Activated naive CD4-positive, alpha-beta T cell treated with anti-CD3 and anti-CD28 coated beads, Interleukin-2, amount 10 ng/mL, durations not matched to agents 7 days and 5 days (primary cell): ENCODE measurements at regions of chr16 and their contacts with region 1.

Region 1: GRCh38 chr16:67546761-67547422 is 15.4 kb upstream of the CTCF start:
- DNase-seq: peak; percentile 85
- H3K4me3 Mint-ChIP-seq: peak overlapping the region; percentile 73
- H3K27ac Mint-ChIP-seq: peak overlapping the region; percentile 100
- H3K4me1 Mint-ChIP-seq: peaks cover 73% of the 10 kb centered on the region
- H3K27me3 Mint-ChIP-seq: no peaks in the 10 kb centered on the region

Region 2: DNA sequence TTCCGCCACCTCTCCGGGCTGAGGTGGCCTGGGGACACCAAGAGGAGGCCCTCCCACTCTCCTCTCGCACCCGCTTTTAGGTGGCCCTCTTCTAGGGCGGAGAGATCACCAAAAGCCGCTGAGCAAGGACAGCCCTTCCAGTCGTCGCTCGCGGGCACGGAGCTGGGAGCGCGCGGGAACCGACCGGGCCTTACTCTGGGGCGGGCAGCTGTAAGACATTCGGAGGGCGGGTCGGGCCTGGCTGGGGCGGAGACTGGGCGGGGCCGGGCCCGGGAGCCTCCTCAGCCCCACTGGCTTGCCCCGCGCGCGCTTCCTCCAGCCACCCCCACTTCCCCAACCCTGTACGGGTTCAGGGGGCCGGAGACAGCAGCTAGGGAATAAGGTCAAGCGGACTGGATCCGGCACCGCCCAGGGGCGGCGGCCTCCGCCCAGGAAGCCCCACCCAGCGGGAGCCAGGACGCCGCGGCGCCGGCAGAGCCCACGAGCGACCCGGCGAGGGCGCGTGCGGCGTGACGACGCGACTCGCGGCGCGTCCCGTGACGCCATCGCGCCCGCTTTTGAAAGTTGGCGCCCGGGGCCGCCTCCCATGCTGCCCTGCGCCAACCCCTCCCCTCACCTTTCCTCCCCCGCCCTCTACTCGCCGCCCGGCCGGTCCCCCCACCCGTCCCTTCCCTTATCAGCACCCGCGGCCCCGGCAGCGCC is 15.1 kb after region 1 on chr16:
- CTCF ChIA-PET with region 1: interaction called, 171 read pairs
- DNase-seq: peak; percentile 99
- H3K4me3 Mint-ChIP-seq: peak overlapping the region; percentile 89
- H3K27ac Mint-ChIP-seq: peak overlapping the region; percentile 97
- H3K4me1 Mint-ChIP-seq: peaks cover 57% of the 10 kb centered on the region
- H3K27me3 Mint-ChIP-seq: no peaks in the 10 kb centered on the region

Region 3: DNA sequence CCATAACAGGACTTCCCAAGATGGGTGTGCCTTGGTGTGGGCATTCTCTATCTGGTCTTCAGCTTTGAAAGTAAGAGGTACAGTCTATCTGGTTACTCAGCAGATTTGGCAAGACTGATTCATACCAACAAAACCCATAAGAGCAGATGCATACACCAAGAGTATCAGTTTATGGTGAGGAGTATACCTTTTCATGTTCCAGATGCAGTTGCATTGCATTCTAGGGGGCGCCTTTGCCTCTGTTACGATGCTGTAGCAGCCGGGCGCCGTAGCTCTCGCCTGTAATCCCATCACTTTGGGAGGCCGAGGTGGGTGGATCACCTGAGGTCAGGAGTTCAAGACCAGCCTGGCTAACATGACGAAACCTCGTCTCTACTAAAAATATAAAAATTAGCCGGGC is 66.9 kb after region 1 on chr16:
- CTCF ChIA-PET with region 1: interaction called, 10 read pairs
- DNase-seq: peak; percentile 25
- H3K4me3 Mint-ChIP-seq: no peak overlapping the region
- H3K27ac Mint-ChIP-seq: no peak overlapping the region
- H3K4me1 Mint-ChIP-seq: no peaks in the 10 kb centered on the region
- H3K27me3 Mint-ChIP-seq: no peaks in the 10 kb centered on the region

Region 4: GRCh38 chr16:67632415-67633172 is 85.7 kb after region 1 on chr16:
- CTCF ChIA-PET with region 1: interaction called, 16 read pairs
- DNase-seq: no peak
- H3K4me3 Mint-ChIP-seq: no peak overlapping the region
- H3K27ac Mint-ChIP-seq: no peak overlapping the region
- H3K4me1 Mint-ChIP-seq: no peaks in the 10 kb centered on the region
- H3K27me3 Mint-ChIP-seq: no peaks in the 10 kb centered on the region

Region 5: DNA sequence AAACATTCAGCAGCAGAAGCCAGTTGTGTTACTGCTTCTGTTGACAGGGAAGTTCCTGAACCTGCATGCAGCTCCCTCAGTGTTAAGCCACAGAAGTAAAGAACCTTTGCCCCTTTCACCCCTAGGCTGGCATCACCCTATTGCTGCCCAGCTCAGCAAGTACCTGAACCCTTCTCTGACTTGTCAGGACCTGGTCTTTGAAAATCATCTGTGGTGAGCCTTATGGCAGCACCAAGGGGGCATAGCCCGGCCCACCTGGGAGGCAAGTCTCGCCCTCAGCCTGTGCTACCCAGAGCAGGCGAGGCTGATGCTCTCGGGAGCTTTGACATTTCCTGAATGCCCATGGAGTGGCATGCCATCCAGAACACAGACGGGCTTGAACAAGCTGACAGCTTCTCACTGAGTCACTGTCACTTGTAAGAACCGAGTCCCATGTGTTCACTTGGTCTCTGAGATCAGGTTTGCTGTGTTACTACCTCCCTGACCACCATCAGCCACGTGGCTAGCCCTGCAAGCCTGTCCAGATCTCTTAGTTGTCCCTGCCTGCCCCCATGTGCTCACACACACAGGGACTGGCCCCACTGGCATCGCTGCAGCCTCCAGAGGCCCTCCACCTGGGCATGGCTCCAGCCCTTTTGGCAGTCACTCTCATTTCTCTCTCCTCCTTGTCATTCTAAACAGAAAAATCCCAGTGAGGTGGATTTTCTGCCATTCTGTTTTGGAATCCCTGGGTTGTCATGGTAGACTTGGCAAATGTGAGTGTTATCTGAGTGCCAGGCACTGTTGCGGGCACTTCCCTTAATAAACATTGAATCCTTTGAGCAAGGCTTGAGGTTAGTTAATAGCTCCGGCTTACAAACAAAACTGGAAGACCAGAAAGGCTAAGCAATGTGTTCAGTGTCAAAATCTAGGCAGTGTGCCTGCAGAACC is 95.2 kb after region 1 on chr16:
- CTCF ChIA-PET with region 1: interaction called, 238 read pairs
- DNase-seq: no peak
- H3K4me3 Mint-ChIP-seq: no peak overlapping the region
- H3K27ac Mint-ChIP-seq: no peak overlapping the region
- H3K4me1 Mint-ChIP-seq: peaks cover 25% of the 10 kb centered on the region
- H3K27me3 Mint-ChIP-seq: no peaks in the 10 kb centered on the region

Region 6: GRCh38 chr16:67660564-67661028 is 113.7 kb after region 1 on chr16 and contains the start of gene PARD6A:
- CTCF ChIA-PET with region 1: interaction called, 75 read pairs
- DNase-seq: peak; percentile 98
- H3K4me3 Mint-ChIP-seq: peak within 1 kb of the TSS; percentile 95
- H3K27ac Mint-ChIP-seq: peak within 1 kb of the TSS; percentile 97
- H3K4me1 Mint-ChIP-seq: peaks cover 34% of the 10 kb centered on the region
- H3K27me3 Mint-ChIP-seq: no peaks in the 10 kb centered on the region

Region 7: GRCh38 chr16:67667817-67668494 is 121.1 kb after region 1 on chr16:
- CTCF ChIA-PET with region 1: interaction called, 75 read pairs
- DNase-seq: peak; percentile 93
- H3K4me3 Mint-ChIP-seq: peak overlapping the region; percentile 87
- H3K27ac Mint-ChIP-seq: peak overlapping the region; percentile 86
- H3K4me1 Mint-ChIP-seq: peaks cover 32% of the 10 kb centered on the region
- H3K27me3 Mint-ChIP-seq: peaks cover 4% of the 10 kb centered on the region